CD4-positive, alpha-beta T cell (primary cell): ENCODE measurements at regions of chr13 and their contacts with region 1.

Region 1: GRCh38 chr13:61546413-61546812 is 130.8 kb upstream of the PCDH20 start:
- DNase-seq: no peak
- ATAC-seq: no peak
- H3K4me3 ChIP-seq: no peak overlapping the region
- H3K4me3 Mint-ChIP-seq: no peak overlapping the region
- H3K27ac ChIP-seq: no peak overlapping the region
- H3K27ac Mint-ChIP-seq: no peak overlapping the region
- H3K4me1 ChIP-seq: no peaks in the 10 kb centered on the region
- H3K4me1 Mint-ChIP-seq: no peaks in the 10 kb centered on the region
- H3K27me3 ChIP-seq: no peaks in the 10 kb centered on the region
- H3K27me3 Mint-ChIP-seq: no peaks in the 10 kb centered on the region
- CTCF ChIP-seq: no peak

Region 2: GRCh38 chr13:61486496-61486895 is 59.9 kb before region 1 on chr13:
- CTCF ChIA-PET with region 1: no interaction called
- POLR2A ChIA-PET with region 1: no interaction called
- intact Hi-C with region 1: no loop called
- DNase-seq: no peak
- ATAC-seq: no peak
- H3K4me3 ChIP-seq: no peak overlapping the region
- H3K4me3 Mint-ChIP-seq: no peak overlapping the region
- H3K27ac ChIP-seq: no peak overlapping the region
- H3K27ac Mint-ChIP-seq: no peak overlapping the region
- H3K4me1 ChIP-seq: no peaks in the 10 kb centered on the region
- H3K4me1 Mint-ChIP-seq: no peaks in the 10 kb centered on the region
- H3K27me3 ChIP-seq: no peaks in the 10 kb centered on the region
- H3K27me3 Mint-ChIP-seq: no peaks in the 10 kb centered on the region
- CTCF ChIP-seq: no peak

Region 3: DNA sequence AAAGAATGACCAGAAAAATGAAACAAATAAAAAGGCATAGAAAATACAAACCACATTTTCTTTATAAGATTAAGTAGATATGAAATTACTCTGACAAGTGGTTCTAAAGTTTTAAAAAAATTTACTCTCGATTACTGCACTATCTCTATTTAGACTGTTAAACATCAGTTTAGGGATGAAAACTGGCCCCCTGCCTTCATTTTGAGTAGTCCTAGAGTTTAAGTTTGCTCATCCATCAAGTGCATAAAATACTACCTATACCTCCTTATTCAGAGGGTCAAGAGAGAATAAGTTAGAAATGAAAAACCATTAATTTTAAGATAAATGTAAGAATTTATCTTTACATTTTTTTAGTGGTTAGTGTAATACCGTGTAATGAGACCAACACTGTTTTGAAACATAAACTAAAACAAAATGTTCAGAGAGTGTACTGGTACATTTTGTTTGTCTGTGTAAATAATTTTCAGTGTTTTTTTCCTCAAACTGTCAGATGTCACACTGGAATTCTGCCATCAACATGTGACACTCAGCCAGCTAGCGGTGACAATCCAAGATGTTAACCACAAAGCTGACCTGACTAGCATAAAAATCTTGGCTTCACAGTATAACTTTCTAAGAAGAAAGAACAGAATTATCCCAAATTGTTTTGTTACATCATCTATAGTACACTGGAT is 54.1 kb after region 1 on chr13:
- CTCF ChIA-PET with region 1: no interaction called
- POLR2A ChIA-PET with region 1: no interaction called
- intact Hi-C with region 1: loop called in 1 of 2 experiments (anchors 10 kb)
- DNase-seq: no peak
- ATAC-seq: no peak
- H3K4me3 ChIP-seq: no peak overlapping the region
- H3K4me3 Mint-ChIP-seq: no peak overlapping the region
- H3K27ac ChIP-seq: no peak overlapping the region
- H3K27ac Mint-ChIP-seq: no peak overlapping the region
- H3K4me1 ChIP-seq: no peaks in the 10 kb centered on the region
- H3K4me1 Mint-ChIP-seq: no peaks in the 10 kb centered on the region
- H3K27me3 ChIP-seq: no peaks in the 10 kb centered on the region
- H3K27me3 Mint-ChIP-seq: no peaks in the 10 kb centered on the region
- CTCF ChIP-seq: no peak